B cell (primary cell): ENCODE measurements at regions of chr7 and their contacts with region 1.

Region 1: GRCh38 chr7:39894904-39895303 is 55.2 kb upstream of the CDK13 start:
- DNase-seq: no peak
- ATAC-seq: no peak
- H3K4me3 ChIP-seq: no peak overlapping the region
- H3K4me3 Mint-ChIP-seq: no peak overlapping the region
- H3K27ac ChIP-seq: no peak overlapping the region
- H3K27ac Mint-ChIP-seq: no peak overlapping the region
- H3K4me1 ChIP-seq: peaks cover 0 to 3% of the 10 kb centered on the region in 2 donors
- H3K4me1 Mint-ChIP-seq: peaks cover 2% of the 10 kb centered on the region
- H3K27me3 ChIP-seq: peaks cover 0 to 4% (median 0%) of the 10 kb centered on the region in 4 experiments
- H3K27me3 Mint-ChIP-seq: peaks cover 20% of the 10 kb centered on the region
- CTCF ChIP-seq: no peak

Region 2: DNA sequence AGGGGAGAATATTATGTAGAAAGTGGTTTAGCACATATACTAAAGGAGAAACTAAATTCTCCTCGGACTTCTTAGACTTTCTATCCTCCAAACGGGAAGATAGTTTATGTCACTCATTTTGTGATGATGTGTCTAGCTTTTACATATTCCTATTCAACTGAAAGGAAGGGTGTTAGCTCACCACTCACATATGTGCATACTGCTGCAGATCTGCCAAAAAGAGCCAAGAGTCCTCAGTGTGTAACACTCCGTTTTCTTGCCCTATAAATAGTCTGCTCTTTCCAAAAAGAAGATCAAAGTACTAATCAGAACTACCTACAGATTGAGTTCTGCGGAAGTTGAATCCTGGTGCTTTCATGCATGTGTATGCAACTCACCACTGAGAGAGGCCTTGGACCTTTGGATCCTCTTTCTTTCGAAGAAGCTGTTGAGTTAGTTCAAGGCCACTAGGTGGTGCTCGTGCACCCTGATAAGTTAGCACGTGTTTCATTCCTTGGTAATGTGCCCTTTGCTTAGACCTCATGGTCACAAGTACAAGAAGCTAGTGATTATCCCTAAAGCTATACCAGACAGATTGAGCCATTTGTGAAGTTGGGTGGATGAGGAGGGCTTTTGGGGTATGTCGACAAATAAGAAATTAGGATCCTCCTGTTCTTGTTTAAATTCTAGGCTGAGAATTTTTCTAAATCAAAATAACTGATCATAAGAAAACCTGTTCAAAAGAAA is 314.6 kb before region 1 on chr7:
- CTCF ChIA-PET with region 1: interaction called, 13 read pairs
- POLR2A ChIA-PET with region 1: no interaction called
- intact Hi-C with region 1: no loop called
- DNase-seq: peak; percentile 87
- ATAC-seq: peak; percentile 95
- H3K4me3 ChIP-seq: no peak overlapping the region
- H3K4me3 Mint-ChIP-seq: no peak overlapping the region
- H3K27ac ChIP-seq: no peak overlapping the region
- H3K27ac Mint-ChIP-seq: no peak overlapping the region
- H3K4me1 ChIP-seq: no peaks in the 10 kb centered on the region
- H3K4me1 Mint-ChIP-seq: no peaks in the 10 kb centered on the region
- H3K27me3 ChIP-seq: no peaks in the 10 kb centered on the region
- H3K27me3 Mint-ChIP-seq: no peaks in the 10 kb centered on the region
- CTCF ChIP-seq: peak; percentile 93

Region 3: DNA sequence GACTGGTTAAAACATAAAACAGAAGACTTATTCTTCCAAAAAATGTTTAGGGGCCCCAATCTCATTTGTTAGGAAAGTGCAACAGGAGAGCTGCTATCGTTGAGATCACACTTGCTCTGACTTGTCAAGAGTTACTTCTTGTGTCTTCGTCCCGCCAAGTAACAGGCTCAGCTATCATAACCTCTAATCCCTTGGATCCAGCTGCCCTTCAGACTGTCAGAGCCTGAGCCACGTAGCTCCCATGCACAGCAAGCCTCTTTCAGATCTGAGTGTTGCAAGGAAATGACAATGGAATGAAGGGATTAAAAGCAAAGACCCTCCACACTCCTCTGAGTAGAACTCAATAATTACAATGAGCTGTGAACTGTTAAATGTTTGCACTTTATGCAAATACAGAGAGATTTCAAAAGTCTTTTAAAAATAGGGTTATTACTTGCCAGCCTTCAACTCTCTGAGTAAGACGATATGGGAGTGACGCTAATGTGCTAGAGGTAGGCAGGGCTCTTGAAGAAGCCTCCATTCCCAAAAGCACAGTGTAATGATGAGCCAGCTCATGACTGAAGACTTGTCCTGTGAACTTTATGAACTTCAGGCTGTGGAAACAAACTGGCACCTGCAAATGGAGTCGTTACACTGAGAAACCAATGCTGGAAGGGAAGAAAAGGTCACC is 26.7 kb after region 1 on chr7:
- CTCF ChIA-PET with region 1: interaction called, 11 read pairs
- POLR2A ChIA-PET with region 1: no interaction called
- intact Hi-C with region 1: no loop called
- DNase-seq: no peak
- ATAC-seq: no peak
- H3K4me3 ChIP-seq: no peak overlapping the region
- H3K4me3 Mint-ChIP-seq: no peak overlapping the region
- H3K27ac ChIP-seq: no peak overlapping the region
- H3K27ac Mint-ChIP-seq: no peak overlapping the region
- H3K4me1 ChIP-seq: no peaks in the 10 kb centered on the region
- H3K4me1 Mint-ChIP-seq: no peaks in the 10 kb centered on the region
- H3K27me3 ChIP-seq: peaks cover 0 to 2% (median 0%) of the 10 kb centered on the region in 4 experiments
- H3K27me3 Mint-ChIP-seq: peaks cover 23% of the 10 kb centered on the region
- CTCF ChIP-seq: no peak

Region 4: DNA sequence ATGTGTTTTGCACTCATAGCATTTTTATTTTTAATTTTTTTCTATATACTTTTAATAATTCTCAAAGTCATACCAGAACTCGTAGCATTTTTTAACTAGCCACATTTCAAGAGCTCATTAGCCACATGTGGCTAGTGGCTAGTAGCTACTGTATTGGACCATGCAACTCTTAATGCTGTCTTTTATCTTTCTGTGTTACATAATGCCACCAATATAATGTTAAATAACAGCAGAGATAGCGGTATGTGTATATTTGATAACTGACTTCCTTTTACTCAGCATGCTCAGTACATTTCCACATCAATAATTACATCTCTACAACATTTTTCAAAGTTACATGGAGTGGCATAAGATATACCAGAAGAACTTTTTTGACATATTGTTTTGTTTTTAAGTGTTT is 146.6 kb after region 1 on chr7:
- CTCF ChIA-PET with region 1: interaction called, 15 read pairs
- POLR2A ChIA-PET with region 1: no interaction called
- intact Hi-C with region 1: no loop called
- DNase-seq: no peak
- ATAC-seq: no peak
- H3K4me3 ChIP-seq: no peak overlapping the region
- H3K4me3 Mint-ChIP-seq: no peak overlapping the region
- H3K27ac ChIP-seq: no peak overlapping the region
- H3K27ac Mint-ChIP-seq: no peak overlapping the region
- H3K4me1 ChIP-seq: peaks cover 0 to 4% of the 10 kb centered on the region in 2 donors
- H3K4me1 Mint-ChIP-seq: peaks cover 5% of the 10 kb centered on the region
- H3K27me3 ChIP-seq: no peaks in the 10 kb centered on the region
- H3K27me3 Mint-ChIP-seq: no peaks in the 10 kb centered on the region
- CTCF ChIP-seq: no peak

Region 5: DNA sequence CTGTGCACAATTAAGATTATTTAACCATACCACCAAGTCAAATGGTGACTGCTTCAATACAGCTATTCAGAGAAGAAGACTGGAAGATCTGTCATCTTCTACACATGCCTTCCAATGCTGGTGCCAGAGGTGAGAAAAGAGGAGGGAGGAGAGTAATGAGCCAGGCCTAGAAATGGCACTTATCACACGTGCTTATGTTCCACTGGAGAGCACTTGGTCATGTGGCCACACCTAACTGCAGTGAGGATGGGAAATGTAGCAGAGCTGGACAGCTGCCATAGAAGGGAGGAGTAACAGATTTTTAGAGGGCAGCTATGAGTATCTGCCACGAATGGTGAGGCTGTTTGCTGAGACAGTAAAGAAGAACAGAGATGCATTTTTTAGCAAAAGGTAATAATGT is 162.4 kb after region 1 on chr7:
- CTCF ChIA-PET with region 1: interaction called, 340 read pairs
- POLR2A ChIA-PET with region 1: no interaction called
- intact Hi-C with region 1: loop called (anchors 1 kb)
- DNase-seq: no peak
- ATAC-seq: no peak
- H3K4me3 ChIP-seq: no peak overlapping the region
- H3K4me3 Mint-ChIP-seq: no peak overlapping the region
- H3K27ac ChIP-seq: no peak overlapping the region
- H3K27ac Mint-ChIP-seq: no peak overlapping the region
- H3K4me1 ChIP-seq: no peaks in the 10 kb centered on the region
- H3K4me1 Mint-ChIP-seq: no peaks in the 10 kb centered on the region
- H3K27me3 ChIP-seq: no peaks in the 10 kb centered on the region
- H3K27me3 Mint-ChIP-seq: no peaks in the 10 kb centered on the region
- CTCF ChIP-seq: no peak

Region 6: GRCh38 chr7:40134428-40135316 is 239.8 kb after region 1 on chr7 and contains the starts of genes MPLKIP and SUGCT:
- CTCF ChIA-PET with region 1: interaction called, 12 read pairs
- POLR2A ChIA-PET with region 1: no interaction called
- intact Hi-C with region 1: loop called (anchors 1 kb)
- DNase-seq: peak; percentile 97
- ATAC-seq: peak; percentile 91
- H3K4me3 ChIP-seq: peak within 1 kb of the TSS; percentile 87 to 95 (median 94)
- H3K4me3 Mint-ChIP-seq: peak within 1 kb of the TSS; percentile 95
- H3K27ac ChIP-seq: peak within 1 kb of the TSS; percentile 84 to 91
- H3K27ac Mint-ChIP-seq: peak within 1 kb of the TSS; percentile 98
- H3K4me1 ChIP-seq: peaks cover 18 to 22% of the 10 kb centered on the region in 2 donors
- H3K4me1 Mint-ChIP-seq: peaks cover 30% of the 10 kb centered on the region
- H3K27me3 ChIP-seq: peaks cover 0 to 3% (median 0%) of the 10 kb centered on the region in 4 experiments
- H3K27me3 Mint-ChIP-seq: peaks cover 3% of the 10 kb centered on the region
- CTCF ChIP-seq: peak; percentile 99
- total RNA-seq, gene MPLKIP: 31.4 and 34.1 TPM in 2 replicates
- total RNA-seq, gene SUGCT: 0.86 and 2.6 TPM in 2 replicates